Activated CD4-positive, alpha-beta T cell treated with anti-CD3 and anti-CD28 coated beads, Interleukin-2, amount 10 ng/mL, durations not matched to agents 7 days and 5 days (primary cell): ENCODE measurements at regions of chr19 and their contacts with region 1.

Region 1: GRCh38 chr19:51338563-51339312 is 3.2 kb downstream of the VSIG10L start:
- DNase-seq: peak; percentile 90
- H3K4me3 Mint-ChIP-seq: peak overlapping the region; percentile 79
- H3K27ac Mint-ChIP-seq: peak overlapping the region; percentile 68
- H3K4me1 Mint-ChIP-seq: peaks cover 17% of the 10 kb centered on the region
- H3K27me3 Mint-ChIP-seq: peaks cover 8% of the 10 kb centered on the region

Region 2: GRCh38 chr19:51282335-51282734 is 56.4 kb before region 1 on chr19:
- CTCF ChIA-PET with region 1: no interaction called
- POLR2A ChIA-PET with region 1: no interaction called
- DNase-seq: no peak
- H3K4me3 Mint-ChIP-seq: no peak overlapping the region
- H3K27ac Mint-ChIP-seq: no peak overlapping the region
- H3K4me1 Mint-ChIP-seq: no peaks in the 10 kb centered on the region
- H3K27me3 Mint-ChIP-seq: peaks cover 46% of the 10 kb centered on the region

Region 3: GRCh38 chr19:51367565-51368365 is 29.0 kb after region 1 on chr19:
- CTCF ChIA-PET with region 1: interaction called, 10 read pairs
- POLR2A ChIA-PET with region 1: interaction called, 3 read pairs
- DNase-seq: peak; percentile 96
- H3K4me3 Mint-ChIP-seq: peak overlapping the region; percentile 99
- H3K27ac Mint-ChIP-seq: peak overlapping the region; percentile 95
- H3K4me1 Mint-ChIP-seq: peaks cover 75% of the 10 kb centered on the region
- H3K27me3 Mint-ChIP-seq: no peaks in the 10 kb centered on the region

Region 4: DNA sequence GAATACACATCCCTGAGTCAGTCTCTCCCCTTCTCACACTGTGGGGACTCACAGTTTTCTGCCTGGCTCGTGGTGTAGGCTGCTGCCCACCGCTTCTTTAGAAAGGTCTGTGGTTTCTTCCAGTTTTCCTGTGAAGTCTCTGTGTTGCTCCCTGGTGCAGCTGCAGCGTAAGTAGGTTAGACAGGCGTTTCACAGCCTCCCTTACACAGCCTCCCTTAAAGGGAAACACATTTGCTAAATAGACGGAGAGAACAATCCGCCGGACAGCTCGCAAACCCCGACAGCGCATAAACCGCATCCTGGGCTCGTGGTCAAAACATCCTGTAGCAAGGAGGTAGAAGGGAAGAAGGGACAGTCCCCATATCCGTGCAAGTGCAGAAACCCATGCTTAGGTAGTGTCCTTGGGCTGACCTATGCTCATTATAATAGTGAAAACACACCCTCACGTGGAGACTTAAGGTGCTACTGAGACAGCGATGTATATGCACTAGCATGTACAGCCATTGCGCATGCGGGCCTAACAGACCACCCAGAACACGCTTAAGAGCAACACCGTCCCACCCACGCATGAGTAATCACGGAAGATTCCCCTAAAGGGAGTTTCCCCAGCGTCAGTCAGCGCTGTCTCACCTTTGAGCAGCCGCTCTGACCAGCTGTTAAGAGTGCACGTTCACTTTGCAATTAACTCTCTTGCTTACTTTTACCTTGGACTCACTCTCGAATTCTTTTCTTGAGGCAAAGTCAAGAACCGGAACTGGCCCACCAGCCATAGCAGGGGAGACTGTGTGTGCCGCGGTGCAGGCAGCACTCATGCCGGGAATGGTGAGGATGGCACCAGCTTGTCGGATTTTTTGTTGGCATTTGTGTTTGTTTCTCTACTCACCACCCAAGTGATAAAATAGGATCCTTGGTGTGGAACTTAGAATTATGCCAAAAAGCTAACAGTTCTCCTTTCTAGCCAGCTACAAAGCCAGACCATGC is 103.0 kb after region 1 on chr19:
- CTCF ChIA-PET with region 1: interaction called, 20 read pairs
- POLR2A ChIA-PET with region 1: no interaction called
- DNase-seq: peak; percentile 89
- H3K4me3 Mint-ChIP-seq: peak overlapping the region; percentile 57
- H3K27ac Mint-ChIP-seq: peak overlapping the region; percentile 73
- H3K4me1 Mint-ChIP-seq: peaks cover 45% of the 10 kb centered on the region
- H3K27me3 Mint-ChIP-seq: peaks cover 23% of the 10 kb centered on the region